ENCODE measurements at regions of chr6 and their contacts with region 1.

Region 1: DNA sequence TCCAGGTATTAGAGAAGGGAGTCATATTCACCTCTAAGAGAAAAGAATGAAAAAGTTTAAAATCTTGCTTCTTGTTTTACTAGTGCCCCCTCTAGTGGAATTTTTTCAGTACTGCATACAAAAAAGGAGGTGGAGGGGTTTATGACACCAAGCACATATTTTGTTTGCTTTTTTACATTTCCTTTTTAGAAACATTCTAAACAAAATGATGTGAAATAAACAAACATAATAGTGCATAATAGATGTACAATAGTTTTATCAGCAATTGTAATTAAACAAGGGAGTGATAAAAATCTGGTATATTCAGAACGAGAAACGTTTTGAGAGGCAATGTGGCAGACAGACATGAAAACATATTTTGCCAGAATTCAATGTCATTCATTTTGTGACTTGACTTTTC is 111.0 kb upstream of the TFAP2D start:
- DNase-seq: peak; percentile 14
- H3K4me3 ChIP-seq: no peak overlapping the region
- H3K27ac ChIP-seq: no peak overlapping the region
- H3K4me1 ChIP-seq: no peaks in the 10 kb centered on the region; a peak in 1 of 4 replicates
- H3K27me3 ChIP-seq: no peaks in the 10 kb centered on the region
- CTCF ChIP-seq: peak; percentile 89
- EP300 ChIP-seq: no peak
- RAD21 ChIP-seq: peak; percentile 82

Region 2: DNA sequence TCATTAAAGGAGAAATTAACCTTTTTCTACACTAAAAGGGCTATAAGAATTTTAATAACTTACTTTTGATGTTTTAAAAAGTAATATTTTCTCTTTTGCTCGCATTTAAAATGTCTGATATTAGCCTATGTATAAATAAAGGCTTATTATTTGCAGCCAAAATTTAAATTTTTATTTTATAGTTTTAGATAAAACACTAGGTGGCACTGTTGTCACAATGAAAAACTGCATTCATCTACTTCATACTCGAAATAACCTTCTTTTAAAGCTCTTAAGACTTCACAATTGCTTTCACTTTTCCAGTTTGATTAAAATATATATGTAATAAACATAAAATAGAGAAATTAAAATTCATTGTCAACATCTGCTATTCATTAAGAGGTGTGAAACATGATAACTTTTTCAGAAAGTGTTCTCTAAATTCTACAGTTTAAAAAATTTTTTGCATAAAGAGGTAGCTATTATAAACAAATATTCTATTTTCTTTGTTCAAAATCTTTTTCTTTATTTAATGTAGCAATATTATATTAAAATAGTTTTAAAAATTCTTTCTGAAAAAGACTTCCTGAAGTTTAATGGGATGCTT is 473.8 kb before region 1 on chr6:
- CTCF ChIA-PET with region 1: interaction called, 11 read pairs
- POLR2A ChIA-PET with region 1: no interaction called
- DNase-seq: peak; percentile 21
- H3K4me3 ChIP-seq: no peak overlapping the region
- H3K27ac ChIP-seq: no peak overlapping the region
- H3K4me1 ChIP-seq: no peaks in the 10 kb centered on the region
- H3K27me3 ChIP-seq: no peaks in the 10 kb centered on the region
- CTCF ChIP-seq: peak; percentile 70
- EP300 ChIP-seq: no peak
- RAD21 ChIP-seq: peak; percentile 64

Region 3: GRCh38 chr6:50145125-50145524 is 457.2 kb before region 1 on chr6:
- CTCF ChIA-PET with region 1: interaction called, 12 read pairs
- POLR2A ChIA-PET with region 1: no interaction called
- DNase-seq: peak; percentile 12
- H3K4me3 ChIP-seq: peak overlapping the region in 1 of 2 experiments; percentile 26; a peak in 1 of 4 replicates
- H3K27ac ChIP-seq: no peak overlapping the region
- H3K4me1 ChIP-seq: no peaks in the 10 kb centered on the region
- H3K27me3 ChIP-seq: no peaks in the 10 kb centered on the region
- CTCF ChIP-seq: peak; percentile 69
- EP300 ChIP-seq: no peak
- RAD21 ChIP-seq: no peak

Region 4: DNA sequence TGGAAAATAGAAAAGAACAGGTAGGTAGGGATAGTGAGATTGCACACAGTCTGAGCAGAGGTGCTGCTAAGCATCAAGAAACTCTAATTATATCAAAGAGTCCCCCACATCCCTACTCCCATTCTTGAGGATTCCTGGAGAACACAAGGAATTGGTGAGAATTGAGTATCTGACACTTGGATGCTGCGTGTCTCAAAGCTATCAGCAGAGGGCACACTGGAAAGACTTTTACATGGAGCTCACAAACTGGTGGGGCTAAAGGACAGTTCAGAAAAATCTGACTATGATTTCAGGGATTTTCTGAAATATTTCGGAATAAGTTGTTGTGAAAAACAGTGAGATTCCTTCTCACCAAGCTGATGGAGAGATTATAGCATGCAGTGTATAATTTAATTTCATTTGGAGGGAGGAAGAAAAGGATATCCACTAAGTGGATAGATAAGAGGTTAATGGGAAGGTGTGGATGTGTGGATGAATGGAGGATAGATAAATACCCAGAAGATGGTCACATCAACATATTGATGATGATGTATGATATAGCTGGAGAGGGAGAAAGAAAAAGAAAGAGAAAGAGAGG is 337.2 kb before region 1 on chr6:
- CTCF ChIA-PET with region 1: interaction called, 22 read pairs
- POLR2A ChIA-PET with region 1: no interaction called
- DNase-seq: peak; percentile 24
- H3K4me3 ChIP-seq: no peak overlapping the region
- H3K27ac ChIP-seq: no peak overlapping the region
- H3K4me1 ChIP-seq: no peaks in the 10 kb centered on the region
- H3K27me3 ChIP-seq: no peaks in the 10 kb centered on the region
- CTCF ChIP-seq: peak; percentile 60
- EP300 ChIP-seq: no peak
- RAD21 ChIP-seq: peak; percentile 65

Region 5: DNA sequence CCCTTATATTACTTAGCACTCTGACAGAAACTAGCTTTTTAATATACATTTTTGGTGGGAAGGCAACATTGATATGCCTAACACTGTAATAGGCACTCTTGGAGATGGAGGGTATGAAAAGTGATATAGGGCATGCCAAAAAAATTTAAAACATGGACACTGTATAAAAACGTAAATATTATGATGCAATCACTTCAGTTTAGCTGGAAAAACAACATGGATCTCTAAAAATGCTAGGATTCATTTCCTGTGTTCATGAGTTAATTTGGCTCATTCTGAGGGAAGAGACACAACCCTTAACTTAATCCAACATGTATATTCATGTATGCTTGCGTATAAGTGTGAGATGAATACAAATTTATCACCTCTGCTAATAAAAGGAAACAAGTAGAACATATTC is 46.3 kb before region 1 on chr6:
- CTCF ChIA-PET with region 1: interaction called, 12 read pairs
- POLR2A ChIA-PET with region 1: no interaction called
- DNase-seq: no peak
- H3K4me3 ChIP-seq: no peak overlapping the region
- H3K27ac ChIP-seq: no peak overlapping the region
- H3K4me1 ChIP-seq: no peaks in the 10 kb centered on the region; a peak in 1 of 4 replicates
- H3K27me3 ChIP-seq: no peaks in the 10 kb centered on the region
- CTCF ChIP-seq: no peak
- EP300 ChIP-seq: no peak
- RAD21 ChIP-seq: no peak

Region 6: DNA sequence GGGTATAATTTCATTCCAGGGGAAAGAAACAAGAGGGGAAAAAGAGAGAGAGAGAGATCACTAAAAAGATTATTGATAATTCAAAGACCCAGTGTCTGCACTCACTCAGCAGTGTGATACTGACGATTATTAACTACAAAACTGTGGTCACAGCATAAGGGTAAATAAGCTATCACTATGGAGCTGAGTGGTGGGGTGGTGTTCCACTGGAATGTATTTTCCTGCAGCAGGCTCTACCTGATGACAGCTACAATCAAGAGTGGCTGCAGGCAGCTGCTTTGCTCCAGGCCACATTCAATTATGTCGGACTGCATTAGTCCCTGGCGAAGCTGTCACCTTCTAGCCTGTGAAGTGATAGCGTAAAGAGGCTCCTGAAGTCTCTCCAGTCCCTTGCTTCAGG is 11.2 kb before region 1 on chr6:
- CTCF ChIA-PET with region 1: interaction called, 10 read pairs
- POLR2A ChIA-PET with region 1: no interaction called
- DNase-seq: peak; percentile 34
- H3K4me3 ChIP-seq: no peak overlapping the region
- H3K27ac ChIP-seq: peak overlapping the region in 1 of 2 experiments; percentile 43; a peak in 1 of 4 replicates
- H3K4me1 ChIP-seq: peaks cover 0 to 6% of the 10 kb centered on the region in 2 experiments; a peak in 2 of 4 replicates
- H3K27me3 ChIP-seq: no peaks in the 10 kb centered on the region
- CTCF ChIP-seq: no peak
- EP300 ChIP-seq: peak in 1 of 2 experiments; percentile 26; a peak in 1 of 4 replicates
- RAD21 ChIP-seq: no peak